Calu3 (cell line): ENCODE measurements at regions of chr9 and their contacts with region 1.

Region 1: GRCh38 chr9:70639853-70640814 is 225.7 kb upstream of the KLF9 start:
- DNase-seq: peak; percentile 22
- H3K4me3 Mint-ChIP-seq: no peak overlapping the region
- H3K27ac Mint-ChIP-seq: no peak overlapping the region
- H3K4me1 Mint-ChIP-seq: no peaks in the 10 kb centered on the region
- H3K27me3 Mint-ChIP-seq: no peaks in the 10 kb centered on the region
- CTCF ChIP-seq: no peak

Region 2: DNA sequence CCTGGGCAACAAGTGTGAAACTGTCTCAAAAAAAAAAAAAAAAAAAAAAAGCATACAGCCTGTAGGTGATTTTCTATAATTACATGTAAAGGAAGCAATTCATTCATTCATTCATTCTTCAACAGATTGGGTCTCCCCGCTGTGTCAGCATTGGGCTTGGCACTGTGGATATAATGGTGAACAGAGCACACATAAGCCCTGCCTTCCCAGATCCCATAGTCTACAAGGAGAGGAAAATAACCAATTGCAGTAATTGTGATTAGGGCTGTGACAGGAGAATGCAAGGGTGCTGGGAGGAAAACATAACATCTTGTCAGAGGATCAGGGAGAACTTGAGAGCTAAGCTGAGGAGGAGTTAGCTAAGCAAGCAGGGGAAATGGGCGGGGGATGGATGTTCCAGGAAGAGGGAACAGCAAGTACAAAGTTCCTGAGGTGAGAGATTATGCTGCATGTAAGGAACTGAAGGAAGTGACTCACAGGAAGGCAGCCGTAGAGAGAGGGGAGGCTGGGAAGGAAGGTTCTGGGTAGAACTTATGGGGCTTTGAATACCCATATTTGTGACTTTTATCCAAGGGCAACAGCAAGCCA is 201.7 kb before region 1 on chr9:
- CTCF ChIA-PET with region 1: no interaction called
- intact Hi-C with region 1: no loop called
- DNase-seq: peak; percentile 35
- H3K4me3 Mint-ChIP-seq: no peak overlapping the region
- H3K27ac Mint-ChIP-seq: peak overlapping the region; percentile 59
- H3K4me1 Mint-ChIP-seq: peaks cover 17% of the 10 kb centered on the region
- H3K27me3 Mint-ChIP-seq: no peaks in the 10 kb centered on the region
- CTCF ChIP-seq: no peak

Region 3: DNA sequence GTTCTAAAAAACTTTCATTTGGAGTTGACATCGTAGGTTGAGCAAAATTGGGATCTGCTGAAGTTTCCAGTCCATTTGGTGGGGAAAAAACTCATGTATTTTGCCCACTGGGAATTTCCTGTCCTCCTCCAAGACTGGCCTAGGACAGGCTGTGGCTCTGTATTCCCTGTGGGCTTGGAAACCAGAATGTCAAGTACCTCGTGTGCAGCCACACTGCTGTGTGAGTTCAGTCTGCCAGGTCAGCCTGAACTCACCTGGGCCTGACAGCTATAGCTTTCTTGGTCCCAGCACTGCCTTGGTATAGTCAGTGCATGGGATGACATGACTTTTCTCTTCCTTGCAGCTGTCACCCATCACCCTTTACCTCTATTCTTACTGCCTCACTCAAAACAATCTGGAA is 190.7 kb before region 1 on chr9:
- CTCF ChIA-PET with region 1: no interaction called
- intact Hi-C with region 1: no loop called
- DNase-seq: no peak
- H3K4me3 Mint-ChIP-seq: no peak overlapping the region
- H3K27ac Mint-ChIP-seq: no peak overlapping the region
- H3K4me1 Mint-ChIP-seq: no peaks in the 10 kb centered on the region
- H3K27me3 Mint-ChIP-seq: no peaks in the 10 kb centered on the region
- CTCF ChIP-seq: no peak

Region 4: GRCh38 chr9:70772601-70773000 is 132.5 kb after region 1 on chr9:
- CTCF ChIA-PET with region 1: no interaction called
- intact Hi-C with region 1: no loop called
- DNase-seq: no peak
- H3K4me3 Mint-ChIP-seq: no peak overlapping the region
- H3K27ac Mint-ChIP-seq: no peak overlapping the region
- H3K4me1 Mint-ChIP-seq: no peaks in the 10 kb centered on the region
- H3K27me3 Mint-ChIP-seq: peaks cover 12% of the 10 kb centered on the region
- CTCF ChIP-seq: no peak

Region 5: GRCh38 chr9:70902692-70903131 is 262.6 kb after region 1 on chr9:
- CTCF ChIA-PET with region 1: no interaction called
- intact Hi-C with region 1: loop called (anchors 5 kb)
- DNase-seq: peak; percentile 28
- H3K4me3 Mint-ChIP-seq: peak overlapping the region; percentile 57
- H3K27ac Mint-ChIP-seq: peak overlapping the region; percentile 72
- H3K4me1 Mint-ChIP-seq: peaks cover 26% of the 10 kb centered on the region
- H3K27me3 Mint-ChIP-seq: no peaks in the 10 kb centered on the region
- CTCF ChIP-seq: no peak

Region 6: DNA sequence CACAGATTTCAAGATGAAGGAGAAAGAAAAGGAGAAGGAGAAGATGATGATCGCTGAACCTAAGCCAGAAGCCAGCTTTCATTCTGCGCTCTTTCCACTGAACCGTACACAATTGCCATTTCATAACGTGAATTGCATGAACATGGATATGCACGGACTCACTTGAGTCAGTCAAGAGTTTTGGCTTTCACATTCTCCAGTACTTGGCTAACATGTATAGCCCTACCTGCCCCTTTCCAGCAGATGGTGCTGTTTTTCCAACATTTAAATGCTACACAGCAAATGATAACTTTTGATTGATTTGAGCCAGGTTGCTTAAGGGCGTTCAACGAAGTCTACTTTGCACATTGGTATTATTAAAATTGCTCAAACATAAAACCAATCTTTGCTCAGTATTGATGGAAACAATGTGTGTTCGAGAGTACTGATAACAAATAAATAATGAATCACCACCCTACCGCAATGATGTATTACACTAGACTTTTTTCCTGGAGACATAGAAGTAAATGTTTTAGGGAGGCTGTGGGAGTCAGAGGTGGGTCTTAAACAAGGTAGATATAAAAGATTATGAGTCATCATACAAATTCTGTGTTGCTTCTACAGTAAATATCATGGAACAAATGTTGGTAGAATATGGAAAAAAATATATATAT is 284.9 kb after region 1 on chr9:
- CTCF ChIA-PET with region 1: interaction called, 5 read pairs
- intact Hi-C with region 1: loop called (anchors 1 kb)
- DNase-seq: peak; percentile 34
- H3K4me3 Mint-ChIP-seq: no peak overlapping the region
- H3K27ac Mint-ChIP-seq: no peak overlapping the region
- H3K4me1 Mint-ChIP-seq: peaks cover 9% of the 10 kb centered on the region
- H3K27me3 Mint-ChIP-seq: no peaks in the 10 kb centered on the region
- CTCF ChIP-seq: peak; percentile 53

Region 7: DNA sequence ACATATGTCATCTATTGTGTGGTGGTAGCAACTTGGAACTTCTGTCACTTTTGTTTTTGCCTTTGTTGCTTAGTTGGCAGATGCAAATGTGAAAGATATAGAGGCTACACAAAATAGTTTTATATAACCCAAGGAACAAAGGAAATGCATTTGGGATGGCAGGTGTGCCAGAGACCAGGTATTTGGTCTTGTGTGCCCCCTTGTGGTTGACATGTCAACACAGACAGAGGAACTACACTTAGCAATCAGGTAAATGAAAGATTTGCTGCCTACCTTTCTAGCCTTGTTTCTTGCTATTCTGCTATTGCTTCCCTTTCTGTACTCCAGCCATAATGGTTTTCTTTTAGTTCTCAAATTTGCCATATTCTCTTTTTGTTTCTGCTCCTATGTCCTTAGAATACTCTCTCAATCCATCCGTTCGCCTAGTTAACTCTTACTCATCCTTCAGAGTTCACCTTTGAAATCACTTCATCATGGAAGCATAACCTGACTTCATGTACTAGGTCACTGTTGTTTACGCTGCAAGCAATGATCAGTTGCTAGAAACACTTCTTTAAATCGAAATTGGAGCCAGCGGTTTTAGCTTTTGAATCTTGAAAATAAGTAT is 361.7 kb after region 1 on chr9:
- CTCF ChIA-PET with region 1: interaction called, 4 read pairs
- intact Hi-C with region 1: loop called (anchors 2 kb)
- DNase-seq: peak; percentile 63
- H3K4me3 Mint-ChIP-seq: no peak overlapping the region
- H3K27ac Mint-ChIP-seq: no peak overlapping the region
- H3K4me1 Mint-ChIP-seq: no peaks in the 10 kb centered on the region
- H3K27me3 Mint-ChIP-seq: no peaks in the 10 kb centered on the region
- CTCF ChIP-seq: peak; percentile 66

Region 8: DNA sequence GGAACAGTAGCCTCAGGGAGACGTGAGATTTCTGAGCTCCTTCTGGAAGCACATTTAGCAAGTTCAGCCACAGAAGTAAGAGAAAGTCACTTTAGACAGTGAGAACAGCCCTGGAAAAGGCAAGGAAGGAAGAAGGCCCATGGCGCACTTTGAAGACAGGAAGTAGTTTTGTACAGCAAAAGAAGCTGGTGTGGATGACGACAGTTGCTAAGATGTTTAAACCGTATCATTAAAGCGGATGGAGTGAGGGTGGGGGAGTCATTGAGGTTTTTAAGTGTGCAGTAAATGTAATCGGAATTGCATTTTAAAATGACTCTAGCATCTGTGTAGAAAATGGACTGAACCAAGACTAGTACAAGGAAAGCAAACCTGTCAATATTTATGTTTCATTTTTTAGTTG is 496.6 kb after region 1 on chr9:
- CTCF ChIA-PET with region 1: no interaction called
- intact Hi-C with region 1: no loop called
- DNase-seq: no peak
- H3K4me3 Mint-ChIP-seq: no peak overlapping the region
- H3K27ac Mint-ChIP-seq: no peak overlapping the region
- H3K4me1 Mint-ChIP-seq: no peaks in the 10 kb centered on the region
- H3K27me3 Mint-ChIP-seq: peaks cover 32% of the 10 kb centered on the region
- CTCF ChIP-seq: no peak

Region 9: DNA sequence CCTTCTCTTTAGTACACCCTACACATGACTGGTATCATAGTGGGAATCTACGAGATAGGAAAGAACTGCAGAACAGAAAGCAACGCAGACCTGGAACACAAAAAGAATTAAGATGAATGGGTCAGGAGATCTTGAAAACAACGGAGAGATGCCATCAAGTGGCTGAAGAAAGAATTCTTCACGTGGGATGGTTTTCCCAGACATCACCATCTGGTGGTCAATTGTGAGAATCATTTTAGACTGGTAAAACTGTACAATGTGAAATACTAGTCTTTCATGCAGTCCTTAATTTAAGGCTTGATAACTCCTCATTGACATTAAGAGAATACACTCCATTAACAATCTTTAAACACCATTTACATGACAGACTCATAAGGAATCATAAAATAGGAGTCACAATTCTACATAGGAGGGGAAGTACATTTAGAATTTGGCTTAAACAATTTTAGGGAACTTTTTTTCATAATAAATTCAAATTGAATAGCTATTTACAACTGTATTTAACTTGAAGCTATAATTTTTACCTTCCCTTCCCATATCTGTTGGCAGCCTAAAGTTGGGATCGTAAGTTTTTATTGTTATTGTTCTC is 609.7 kb after region 1 on chr9:
- CTCF ChIA-PET with region 1: interaction called, 10 read pairs
- intact Hi-C with region 1: loop called (anchors 1 kb)
- DNase-seq: peak; percentile 19
- H3K4me3 Mint-ChIP-seq: no peak overlapping the region
- H3K27ac Mint-ChIP-seq: no peak overlapping the region
- H3K4me1 Mint-ChIP-seq: no peaks in the 10 kb centered on the region
- H3K27me3 Mint-ChIP-seq: peaks cover 46% of the 10 kb centered on the region
- CTCF ChIP-seq: peak; percentile 39